Activated CD8-positive, alpha-beta T cell treated with anti-CD3 and anti-CD28 coated beads, Interleukin-2, amount 10 ng/mL, durations not matched to agents 7 days and 5 days (primary cell): ENCODE measurements at regions of chr1 and their contacts with region 1.

Region 1: DNA sequence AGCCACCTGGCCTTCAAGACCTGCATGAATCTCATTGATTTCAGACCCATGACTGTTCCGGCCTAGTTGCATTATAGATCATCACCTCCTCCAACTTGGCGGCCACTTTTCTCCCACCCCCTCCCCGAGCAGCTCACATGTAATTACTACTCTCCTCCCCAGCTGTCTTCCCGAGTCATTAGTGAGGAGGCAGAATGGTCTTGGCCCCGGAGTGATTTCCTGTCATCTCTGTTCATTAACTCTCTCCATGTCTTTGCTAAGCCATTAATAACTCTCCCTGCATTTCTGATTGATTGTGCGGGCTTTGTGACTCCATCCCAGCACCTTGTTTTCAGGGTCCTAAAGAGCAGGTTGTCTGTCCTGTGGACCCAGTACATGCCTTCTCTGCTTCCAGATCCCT is 75.6 kb upstream of the CNTN2 start:
- DNase-seq: no peak
- ATAC-seq: no peak
- H3K4me3 Mint-ChIP-seq: no peak overlapping the region
- H3K27ac Mint-ChIP-seq: no peak overlapping the region
- H3K4me1 Mint-ChIP-seq: peaks cover 13% of the 10 kb centered on the region
- H3K27me3 Mint-ChIP-seq: peaks cover 21% of the 10 kb centered on the region

Region 2: DNA sequence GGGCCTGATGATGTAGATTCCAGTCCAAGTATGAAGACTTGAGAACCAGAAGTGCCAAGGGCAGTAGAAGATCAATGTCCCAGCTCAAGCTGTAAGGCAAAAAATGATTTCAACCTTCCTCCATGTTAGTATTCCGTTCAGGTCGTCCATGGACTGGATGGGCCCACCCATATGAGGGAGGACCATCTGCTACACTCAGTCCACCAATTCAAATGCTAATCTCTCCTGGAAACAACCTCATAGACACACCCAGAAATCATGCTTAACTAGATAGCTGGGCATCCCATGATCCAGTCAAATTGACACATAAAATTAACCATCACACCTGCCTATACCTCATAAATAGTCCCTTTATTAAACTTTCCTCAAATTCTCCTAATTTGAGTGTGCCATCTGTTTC is 170.1 kb before region 1 on chr1:
- CTCF ChIA-PET with region 1: no interaction called
- POLR2A ChIA-PET with region 1: no interaction called
- DNase-seq: no peak
- ATAC-seq: no peak
- H3K4me3 Mint-ChIP-seq: no peak overlapping the region
- H3K27ac Mint-ChIP-seq: no peak overlapping the region
- H3K4me1 Mint-ChIP-seq: no peaks in the 10 kb centered on the region
- H3K27me3 Mint-ChIP-seq: no peaks in the 10 kb centered on the region

Region 3: DNA sequence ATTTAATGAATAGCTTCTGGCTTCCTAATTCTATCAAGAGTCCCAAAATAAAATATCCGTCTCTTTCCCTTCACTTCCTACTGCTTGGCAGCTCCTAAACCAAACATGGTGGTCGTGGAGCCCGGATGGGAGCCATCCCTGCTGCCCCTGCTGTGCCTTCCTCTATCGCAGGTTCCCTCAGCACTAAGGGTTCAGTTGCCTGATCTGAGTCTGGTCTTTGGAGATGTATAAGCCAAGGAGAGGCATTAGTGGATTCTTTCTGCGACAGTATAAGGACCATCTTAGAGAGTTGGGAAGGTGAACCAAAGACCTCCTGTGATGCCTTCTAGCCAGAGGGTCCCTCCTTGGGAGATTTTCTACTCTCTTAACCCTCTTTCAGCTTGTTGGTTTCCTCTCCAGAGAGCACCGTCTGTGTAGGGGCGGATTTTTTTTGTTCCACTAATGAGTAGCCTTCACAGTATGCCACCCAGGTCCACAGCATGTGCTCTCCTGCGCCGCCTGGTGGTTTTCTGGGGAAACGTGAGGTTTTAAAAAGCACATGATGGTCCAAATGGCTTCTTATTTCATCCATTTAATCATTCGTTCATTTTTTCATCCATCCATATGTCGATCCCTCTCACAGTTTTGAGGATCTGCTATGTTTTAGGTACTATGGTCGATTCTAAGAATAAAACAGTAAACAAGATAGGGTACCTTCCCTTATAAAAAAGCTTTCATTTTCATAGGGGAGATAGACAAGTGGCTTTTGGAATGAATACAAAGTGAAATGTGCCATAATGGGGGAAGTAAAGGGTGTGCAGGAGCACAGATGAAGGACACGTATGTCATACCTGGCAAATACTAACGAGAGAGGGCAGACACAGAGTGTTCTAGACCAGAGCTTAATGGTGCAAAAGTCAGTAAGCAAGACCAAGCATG is 25.8 kb before region 1 on chr1:
- CTCF ChIA-PET with region 1: interaction called, 10 read pairs
- POLR2A ChIA-PET with region 1: no interaction called
- DNase-seq: peak; percentile 67
- ATAC-seq: peak; percentile 58
- H3K4me3 Mint-ChIP-seq: no peak overlapping the region
- H3K27ac Mint-ChIP-seq: no peak overlapping the region
- H3K4me1 Mint-ChIP-seq: peaks cover 6% of the 10 kb centered on the region
- H3K27me3 Mint-ChIP-seq: peaks cover 13% of the 10 kb centered on the region